Mammary epithelial cell (primary cell): ENCODE measurements at regions of chr17 and their contacts with region 1.

Region 1: GRCh38 chr17:45135192-45135977 is at the start of gene ACBD4:
- DNase-seq: peak; percentile 93
- H3K4me3 ChIP-seq: peak within 1 kb of the TSS; percentile 68 to 80 (median 71)
- H3K27ac ChIP-seq: peak within 1 kb of the TSS; percentile 26
- H3K4me1 ChIP-seq: peaks cover 30% of the 10 kb centered on the region
- H3K27me3 ChIP-seq: no peaks in the 10 kb centered on the region
- CTCF ChIP-seq: peak; percentile 100
- total RNA-seq, gene ACBD4: 6.5 to 8.1 TPM

Region 2: GRCh38 chr17:44024271-44024663 is 1111.1 kb before region 1 on chr17:
- CTCF ChIA-PET with region 1: no interaction called
- dilution Hi-C with region 1: no loop called
- in situ Hi-C with region 1: no loop called
- intact Hi-C with region 1: no loop called
- DNase-seq: no peak
- H3K4me3 ChIP-seq: no peak overlapping the region
- H3K27ac ChIP-seq: no peak overlapping the region
- H3K4me1 ChIP-seq: no peaks in the 10 kb centered on the region
- H3K27me3 ChIP-seq: no peaks in the 10 kb centered on the region
- CTCF ChIP-seq: no peak

Region 3: DNA sequence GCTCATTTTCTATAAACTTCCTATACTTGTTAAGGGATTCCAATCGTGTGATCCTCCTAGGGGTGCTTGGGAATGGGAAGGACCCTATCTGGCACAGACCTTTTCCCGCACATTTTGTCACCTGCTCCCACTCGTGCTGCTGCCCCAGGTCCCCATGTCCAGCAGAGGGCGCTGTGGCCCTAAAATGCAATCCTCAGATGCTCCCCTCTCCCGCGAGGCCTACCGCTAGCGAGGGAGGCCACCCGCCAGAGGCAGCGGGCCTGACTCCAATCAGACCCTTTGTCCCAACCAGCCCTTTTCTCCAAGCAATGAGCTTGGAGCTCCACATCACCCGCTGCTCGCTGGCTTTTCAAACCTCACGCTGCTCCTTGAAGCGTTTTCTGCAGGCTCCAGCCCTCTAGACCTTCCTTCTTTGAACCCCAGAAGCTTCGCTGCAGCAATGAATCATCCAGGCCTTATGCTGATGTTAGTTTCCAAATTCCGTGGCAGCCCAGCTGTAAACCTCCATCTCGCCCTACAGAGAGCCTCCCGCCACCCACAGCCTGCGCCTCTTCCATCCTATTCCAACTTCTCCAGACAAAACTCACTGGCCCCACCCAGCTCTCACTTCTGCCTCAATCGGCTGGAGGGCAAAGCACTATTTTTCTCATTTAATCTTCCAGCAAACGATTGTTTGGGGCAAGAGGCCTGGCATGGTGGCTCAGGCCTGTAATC is 601.7 kb before region 1 on chr17:
- CTCF ChIA-PET with region 1: no interaction called
- dilution Hi-C with region 1: no loop called
- in situ Hi-C with region 1: no loop called
- intact Hi-C with region 1: loop called (anchors 5 kb)
- DNase-seq: peak; percentile 52
- H3K4me3 ChIP-seq: no peak overlapping the region
- H3K27ac ChIP-seq: no peak overlapping the region
- H3K4me1 ChIP-seq: no peaks in the 10 kb centered on the region
- H3K27me3 ChIP-seq: no peaks in the 10 kb centered on the region
- CTCF ChIP-seq: peak; percentile 91 to 97

Region 4: DNA sequence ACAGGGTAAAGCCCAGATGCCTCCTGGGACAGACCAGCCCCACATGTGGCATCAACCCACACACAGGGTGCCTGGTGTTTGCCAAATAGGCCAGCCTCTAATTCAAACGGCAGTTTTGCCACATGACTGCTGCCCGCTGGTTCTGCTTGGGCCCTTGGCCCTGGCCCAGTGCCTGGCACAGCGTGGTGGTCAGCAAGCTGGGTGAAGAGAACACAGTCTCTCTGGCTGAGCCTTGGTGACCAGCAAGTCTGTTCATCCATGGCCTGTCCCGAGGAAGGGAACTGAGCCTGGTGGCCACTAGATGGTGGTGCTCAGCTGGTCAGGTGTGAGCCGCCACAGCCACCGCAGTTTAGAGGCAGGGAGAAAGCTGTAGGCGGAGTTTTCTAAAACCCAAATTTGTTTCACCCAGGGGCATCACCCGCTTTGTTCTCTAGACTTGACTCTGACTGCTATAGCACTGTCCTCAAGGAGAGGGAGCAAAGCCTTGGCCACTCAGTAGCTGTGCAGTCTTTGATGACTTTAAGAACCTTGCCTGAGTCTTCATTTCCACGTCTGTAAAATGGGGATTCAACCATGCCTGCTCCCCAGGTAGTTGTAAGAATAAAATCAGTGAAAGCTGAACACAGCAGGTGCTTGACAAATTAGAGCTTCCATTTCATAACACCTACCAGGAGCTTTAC is 215.4 kb before region 1 on chr17:
- CTCF ChIA-PET with region 1: no interaction called
- dilution Hi-C with region 1: no loop called
- in situ Hi-C with region 1: no loop called
- intact Hi-C with region 1: loop called (anchors 1 kb)
- DNase-seq: peak; percentile 66
- H3K4me3 ChIP-seq: no peak overlapping the region
- H3K27ac ChIP-seq: no peak overlapping the region
- H3K4me1 ChIP-seq: peaks cover 30% of the 10 kb centered on the region
- H3K27me3 ChIP-seq: no peaks in the 10 kb centered on the region
- CTCF ChIP-seq: peak; percentile 82 to 90

Region 5: DNA sequence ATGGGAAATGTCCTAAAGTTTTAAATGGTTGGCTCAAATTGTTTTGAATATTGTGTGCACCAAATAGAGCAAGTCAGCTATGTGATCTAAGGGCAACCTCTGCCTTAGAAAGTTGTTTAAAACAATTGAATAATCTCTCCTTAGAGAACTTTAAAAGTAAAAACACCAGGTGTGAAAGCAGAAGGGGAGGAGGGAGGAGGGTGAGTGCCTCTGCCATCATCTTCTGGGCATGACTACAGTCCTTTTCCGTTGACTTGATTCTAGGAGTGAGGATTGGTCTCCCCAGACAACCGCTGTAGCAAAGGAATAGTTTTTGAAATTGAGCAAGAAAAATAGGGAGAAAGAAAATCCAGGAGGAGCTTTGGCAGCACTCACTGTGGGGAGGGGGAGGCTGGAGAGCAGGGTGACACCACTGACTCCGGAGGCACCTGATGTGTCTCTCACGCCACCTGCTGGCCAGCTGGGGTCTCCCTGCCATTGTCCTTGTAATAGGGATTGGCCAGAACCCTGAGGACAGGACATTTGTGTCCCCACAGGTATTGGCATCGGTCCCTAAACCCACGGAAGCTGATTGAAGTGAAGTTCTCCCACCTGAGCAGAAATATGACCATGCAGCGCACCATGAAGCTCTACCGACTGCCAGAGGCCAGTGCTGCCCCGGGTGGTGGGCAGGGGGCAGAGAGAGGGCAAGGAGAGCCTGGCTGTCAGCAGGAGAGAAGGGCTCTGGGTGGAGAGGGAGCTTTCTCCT is 36.3 kb before region 1 on chr17:
- CTCF ChIA-PET with region 1: no interaction called
- dilution Hi-C with region 1: no loop called
- in situ Hi-C with region 1: no loop called
- intact Hi-C with region 1: loop called (anchors 1 kb)
- DNase-seq: peak; percentile 55
- H3K4me3 ChIP-seq: no peak overlapping the region
- H3K27ac ChIP-seq: peak overlapping the region; percentile 25
- H3K4me1 ChIP-seq: peaks cover 48% of the 10 kb centered on the region
- H3K27me3 ChIP-seq: no peaks in the 10 kb centered on the region
- CTCF ChIP-seq: peak; percentile 91 to 95

Region 6: GRCh38 chr17:45155029-45155428 is 19.6 kb after region 1 on chr17:
- CTCF ChIA-PET with region 1: interaction called, 73 read pairs
- dilution Hi-C with region 1: no loop called
- in situ Hi-C with region 1: no loop called
- intact Hi-C with region 1: no loop called
- DNase-seq: no peak
- H3K4me3 ChIP-seq: no peak overlapping the region
- H3K27ac ChIP-seq: no peak overlapping the region
- H3K4me1 ChIP-seq: peaks cover 18% of the 10 kb centered on the region
- H3K27me3 ChIP-seq: no peaks in the 10 kb centered on the region
- CTCF ChIP-seq: no peak

Region 7: DNA sequence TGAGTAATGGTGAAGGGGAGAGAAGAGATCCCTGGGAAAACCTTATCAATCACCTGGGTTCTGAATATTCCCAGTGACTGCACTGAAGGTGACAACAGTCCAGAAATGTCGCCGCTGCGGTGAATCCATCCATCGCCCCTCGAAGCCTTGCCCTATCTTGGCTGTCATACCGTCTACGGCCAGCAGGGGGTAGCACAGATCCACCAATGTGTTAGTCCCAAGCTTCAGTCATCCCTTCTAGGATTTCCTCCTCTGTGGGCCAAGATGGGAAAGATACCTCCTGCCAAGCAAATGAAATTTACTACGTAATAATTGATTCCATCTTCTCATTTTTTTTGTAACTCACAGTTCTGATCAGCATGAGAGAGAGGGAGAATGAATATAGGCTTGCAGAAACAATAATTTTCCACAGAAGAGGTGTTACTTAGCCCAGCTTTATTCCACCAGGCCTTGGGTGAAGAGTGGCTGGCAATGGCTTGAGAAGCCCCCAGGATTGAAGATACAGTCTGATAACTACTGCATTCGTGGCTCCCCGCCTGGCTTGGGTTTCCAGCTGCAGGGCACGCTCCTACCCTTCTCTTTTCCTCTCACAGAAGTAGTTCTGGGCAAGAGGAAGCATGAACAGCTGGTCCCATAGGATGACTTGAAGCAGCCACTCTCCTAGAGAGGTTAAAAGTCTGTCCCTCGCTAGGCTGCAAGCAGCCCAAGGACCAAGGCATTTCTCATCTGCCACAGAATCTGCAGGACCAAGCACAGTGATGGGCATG is 83.7 kb after region 1 on chr17:
- CTCF ChIA-PET with region 1: interaction called, 11 read pairs
- dilution Hi-C with region 1: no loop called
- in situ Hi-C with region 1: no loop called
- intact Hi-C with region 1: loop called (anchors 1 kb)
- DNase-seq: peak; percentile 55
- H3K4me3 ChIP-seq: no peak overlapping the region
- H3K27ac ChIP-seq: no peak overlapping the region
- H3K4me1 ChIP-seq: peaks cover 9% of the 10 kb centered on the region
- H3K27me3 ChIP-seq: no peaks in the 10 kb centered on the region
- CTCF ChIP-seq: peak; percentile 84 to 93

Region 8: GRCh38 chr17:45385331-45385997 is 250.1 kb after region 1 on chr17:
- CTCF ChIA-PET with region 1: no interaction called
- dilution Hi-C with region 1: no loop called
- in situ Hi-C with region 1: loop called in 1 of 2 experiments (anchors 10 kb)
- intact Hi-C with region 1: loop called (anchors 1 kb)
- DNase-seq: peak; percentile 70
- H3K4me3 ChIP-seq: no peak overlapping the region
- H3K27ac ChIP-seq: no peak overlapping the region
- H3K4me1 ChIP-seq: peaks cover 30% of the 10 kb centered on the region
- H3K27me3 ChIP-seq: no peaks in the 10 kb centered on the region
- CTCF ChIP-seq: peak; percentile 98 to 99